HepG2 (cell line): ENCODE measurements at regions of chr12 and their contacts with region 1.

Region 1: DNA sequence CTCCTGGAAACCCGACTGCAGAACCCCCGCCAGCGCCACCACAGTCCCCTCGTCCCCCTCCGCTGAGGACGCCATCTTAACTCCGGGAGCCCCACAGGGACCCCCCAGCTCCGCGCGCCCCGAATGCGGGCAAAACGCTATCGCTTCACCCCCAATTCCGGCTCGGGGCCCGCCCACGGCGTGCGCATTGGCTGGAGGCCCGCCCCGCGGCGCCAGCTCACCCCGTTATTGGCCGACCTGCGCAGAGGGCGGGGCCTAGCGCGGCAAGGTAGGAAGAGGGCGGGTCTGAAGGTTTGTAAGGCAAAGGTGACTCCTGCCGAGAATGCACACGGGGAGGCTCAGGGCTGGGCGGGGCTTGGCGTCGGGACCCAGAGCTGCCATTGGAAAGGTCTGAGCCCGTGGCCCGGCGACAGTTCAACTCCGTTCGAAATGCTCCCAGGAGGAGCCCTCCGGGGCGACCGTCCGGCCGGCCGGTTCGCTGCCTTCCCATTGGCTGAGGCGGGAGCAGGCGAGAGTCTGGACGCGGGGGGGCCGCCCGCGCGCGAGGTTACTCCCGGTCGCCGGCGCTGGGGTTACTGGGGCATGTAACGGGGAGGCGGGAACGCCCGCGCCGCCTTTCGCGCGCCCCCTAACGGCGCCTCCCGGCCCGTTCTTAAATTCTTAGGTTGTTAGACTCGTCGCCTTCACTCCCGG is at the start of gene LPCAT3:
- DNase-seq: peak; percentile 92
- ATAC-seq: peak; percentile 96
- H3K4me3 ChIP-seq: peak within 1 kb of the TSS; percentile 60 to 97 (median 85)
- H3K27ac ChIP-seq: peak within 1 kb of the TSS; percentile 97
- H3K4me1 ChIP-seq: peaks cover 35% of the 10 kb centered on the region
- H3K27me3 ChIP-seq: no peaks in the 10 kb centered on the region; a peak in 1 of 5 replicates
- CTCF ChIP-seq: peak; percentile 87
- EP300 ChIP-seq: peak in 1 of 2 experiments; percentile 34; a peak in 1 of 4 replicates
- POLR2A ChIP-seq: peak; percentile 71 to 78
- RAD21 ChIP-seq: peak; percentile 92
- total RNA-seq, gene LPCAT3: 22.1 and 44.5 TPM in 2 replicates

Region 2: GRCh38 chr12:6965026-6965661 is 53.4 kb before region 1 on chr12:
- CTCF ChIA-PET with region 1: interaction called, 4 read pairs
- POLR2A ChIA-PET with region 1: interaction called, 16 read pairs
- in situ Hi-C with region 1: no loop called
- intact Hi-C with region 1: loop called (anchors 1 kb)
- DNase-seq: peak; percentile 72
- ATAC-seq: peak; percentile 54
- H3K4me3 ChIP-seq: no peak overlapping the region
- H3K27ac ChIP-seq: peak overlapping the region; percentile 46
- H3K4me1 ChIP-seq: peaks cover 57% of the 10 kb centered on the region
- H3K27me3 ChIP-seq: no peaks in the 10 kb centered on the region; a peak in 1 of 5 replicates
- CTCF ChIP-seq: peak; percentile 87
- EP300 ChIP-seq: no peak
- POLR2A ChIP-seq: peak; percentile 4 to 54; a peak in 2 of 4 replicates
- RAD21 ChIP-seq: peak; percentile 65

Region 3: DNA sequence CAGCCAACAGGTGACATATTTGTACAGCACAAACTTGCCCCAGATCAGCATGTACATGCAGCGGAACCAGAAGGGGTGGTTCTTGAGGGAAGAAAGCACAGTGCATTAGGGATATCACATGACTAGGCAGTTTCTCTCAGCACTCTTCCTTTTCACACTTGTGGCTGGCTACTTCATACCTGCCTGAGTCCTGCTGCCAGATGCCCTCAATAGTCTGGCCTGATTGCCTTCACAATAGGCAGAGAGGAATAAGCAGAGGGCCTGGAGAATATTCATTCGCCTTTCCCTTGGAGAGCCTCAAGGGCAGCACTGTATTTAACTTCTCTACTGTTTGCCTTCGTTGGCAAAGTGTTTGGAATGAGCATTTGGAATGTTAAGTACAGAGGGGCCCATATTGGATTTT is 39.9 kb before region 1 on chr12:
- CTCF ChIA-PET with region 1: no interaction called
- POLR2A ChIA-PET with region 1: interaction called, 52 read pairs
- in situ Hi-C with region 1: loop called (anchors 5 kb)
- intact Hi-C with region 1: loop called (anchors 2 kb)
- DNase-seq: no peak
- ATAC-seq: no peak
- H3K4me3 ChIP-seq: no peak overlapping the region
- H3K27ac ChIP-seq: peak overlapping the region; percentile 98
- H3K4me1 ChIP-seq: peaks cover 55% of the 10 kb centered on the region
- H3K27me3 ChIP-seq: no peaks in the 10 kb centered on the region
- CTCF ChIP-seq: no peak
- EP300 ChIP-seq: no peak
- POLR2A ChIP-seq: no peak
- RAD21 ChIP-seq: no peak